Cardiac septum (tissue), 1 donor: ENCODE measurements at regions of chr4 and their contacts with region 1.

Region 1: GRCh38 chr4:39458505-39459300 is at the starts of genes LIAS and RPL9:
- DNase-seq: peak; percentile 97
- total RNA-seq, gene LIAS: 15.2 TPM
- total RNA-seq, gene RPL9: 532 TPM

Region 2: DNA sequence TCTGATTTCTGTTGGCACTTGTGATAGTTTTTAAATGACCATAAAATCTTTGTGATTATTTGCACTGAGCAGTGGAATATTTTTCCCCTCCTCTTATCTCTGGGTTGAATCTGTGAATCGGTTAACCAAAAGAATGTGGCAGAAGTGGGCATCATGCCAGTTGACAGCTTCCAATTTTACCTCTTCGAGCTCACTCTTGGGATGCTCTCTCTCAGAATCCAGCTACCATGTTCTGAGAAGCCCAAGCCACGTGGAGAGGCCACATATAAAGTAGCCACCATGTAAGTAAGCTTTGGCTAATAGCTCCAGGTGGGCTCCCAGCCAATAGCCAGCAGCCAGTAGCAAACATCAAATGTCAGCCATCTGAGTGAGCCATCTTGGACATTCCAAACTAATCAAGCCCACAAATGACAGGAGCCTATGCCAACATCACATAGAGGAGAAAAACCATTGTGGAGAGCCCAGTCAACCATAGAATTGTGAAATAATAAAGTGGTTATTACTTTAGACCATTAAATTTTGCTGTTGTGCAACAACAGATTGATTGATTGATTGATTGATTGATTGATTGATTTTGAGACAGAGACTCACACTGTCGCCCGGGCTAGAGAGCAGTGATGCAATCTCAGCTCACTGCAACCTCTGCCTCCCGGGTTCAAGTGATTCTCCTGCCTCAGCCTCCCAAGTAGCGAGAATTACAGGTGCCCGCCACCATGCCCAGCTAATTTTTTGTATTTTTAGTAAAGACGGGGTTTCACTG is 289.1 kb before region 1 on chr4:
- intact Hi-C with region 1: no loop called
- DNase-seq: no peak

Region 3: GRCh38 chr4:39181905-39182638 is 276.6 kb before region 1 on chr4 and contains the start of gene WDR19:
- intact Hi-C with region 1: loop called (anchors 5 kb)
- DNase-seq: peak; percentile 100
- total RNA-seq, gene WDR19: 9.4 TPM

Region 4: GRCh38 chr4:39365830-39366771 is 92.6 kb before region 1 on chr4 and contains the start of gene RFC1:
- intact Hi-C with region 1: loop called (anchors 5 kb)
- DNase-seq: peak; percentile 94
- total RNA-seq, gene RFC1: 22.3 TPM

Region 5: DNA sequence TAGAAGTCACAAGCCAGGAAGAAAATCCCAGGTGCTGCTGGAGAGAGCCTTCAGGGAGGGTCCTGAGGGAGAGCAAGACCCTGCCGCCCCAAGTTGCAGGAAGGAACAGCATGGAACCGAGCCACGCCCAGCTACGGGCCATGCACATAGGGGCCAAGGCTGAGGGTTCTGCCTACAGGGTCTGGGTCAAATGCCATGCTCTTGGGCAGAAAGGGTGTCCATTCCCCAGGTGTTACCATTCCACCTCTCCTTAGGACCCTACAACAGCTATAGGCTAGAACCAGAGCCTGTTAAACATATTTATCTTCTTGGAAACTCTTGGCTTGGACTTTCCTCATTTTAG is 22.5 kb before region 1 on chr4:
- intact Hi-C with region 1: no loop called
- DNase-seq: no peak